ENCODE measurements at regions of chr17 and their contacts with region 1.

Region 1: GRCh38 chr17:45228763-45229539 is 7.3 kb downstream of the FMNL1 start:
- DNase-seq: peak; percentile 93
- ATAC-seq: peak; percentile 37
- H3K4me3 Mint-ChIP-seq: peak overlapping the region; percentile 94
- H3K27ac Mint-ChIP-seq: peak overlapping the region; percentile 100
- H3K4me1 Mint-ChIP-seq: peaks cover 82% of the 10 kb centered on the region
- H3K27me3 Mint-ChIP-seq: no peaks in the 10 kb centered on the region

Region 2: GRCh38 chr17:44947461-44948314 is 281.3 kb before region 1 on chr17 and contains the start of gene KIF18B:
- CTCF ChIA-PET with region 1: no interaction called
- POLR2A ChIA-PET with region 1: no interaction called
- intact Hi-C with region 1: loop called in 1 of 2 experiments (anchors 5 kb)
- DNase-seq: peak; percentile 96
- ATAC-seq: peak; percentile 98
- H3K4me3 Mint-ChIP-seq: peak within 1 kb of the TSS; percentile 90
- H3K27ac Mint-ChIP-seq: peak within 1 kb of the TSS; percentile 88
- H3K4me1 Mint-ChIP-seq: peaks cover 4% of the 10 kb centered on the region
- H3K27me3 Mint-ChIP-seq: no peaks in the 10 kb centered on the region
- total RNA-seq, gene KIF18B: 38.9 to 48.7 TPM

Region 3: GRCh38 chr17:45317112-45317928 is 88.4 kb after region 1 on chr17:
- CTCF ChIA-PET with region 1: interaction called, 13 read pairs
- POLR2A ChIA-PET with region 1: interaction called, 86 read pairs
- intact Hi-C with region 1: loop called (anchors 1 kb)
- DNase-seq: peak; percentile 100
- ATAC-seq: peak; percentile 81
- H3K4me3 Mint-ChIP-seq: peak overlapping the region; percentile 91
- H3K27ac Mint-ChIP-seq: peak overlapping the region; percentile 89
- H3K4me1 Mint-ChIP-seq: peaks cover 65% of the 10 kb centered on the region
- H3K27me3 Mint-ChIP-seq: no peaks in the 10 kb centered on the region

Region 4: GRCh38 chr17:45357364-45357997 is 128.5 kb after region 1 on chr17:
- CTCF ChIA-PET with region 1: no interaction called
- POLR2A ChIA-PET with region 1: interaction called, 10 read pairs
- intact Hi-C with region 1: no loop called
- DNase-seq: no peak
- ATAC-seq: peak; percentile 68
- H3K4me3 Mint-ChIP-seq: no peak overlapping the region
- H3K27ac Mint-ChIP-seq: no peak overlapping the region
- H3K4me1 Mint-ChIP-seq: peaks cover 35% of the 10 kb centered on the region
- H3K27me3 Mint-ChIP-seq: peaks cover 17% of the 10 kb centered on the region